PC-9 (cell line): ENCODE measurements at regions of chr7 and their contacts with region 1.

Region 1: GRCh38 chr7:105309235-105310169 is 79.2 kb downstream of the SRPK2 start:
- DNase-seq: no peak
- H3K4me3 ChIP-seq: no peak overlapping the region
- H3K27ac ChIP-seq: no peak overlapping the region
- H3K4me1 ChIP-seq: peaks cover 10% of the 10 kb centered on the region
- H3K27me3 ChIP-seq: no peaks in the 10 kb centered on the region
- CTCF ChIP-seq: no peak

Region 2: GRCh38 chr7:105131033-105131656 is 178.4 kb before region 1 on chr7:
- CTCF ChIA-PET with region 1: no interaction called
- POLR2A ChIA-PET with region 1: interaction called, 5 read pairs
- intact Hi-C with region 1: loop called (anchors 10 kb)
- DNase-seq: no peak
- H3K4me3 ChIP-seq: no peak overlapping the region
- H3K27ac ChIP-seq: no peak overlapping the region
- H3K4me1 ChIP-seq: peaks cover 7% of the 10 kb centered on the region
- H3K27me3 ChIP-seq: no peaks in the 10 kb centered on the region
- CTCF ChIP-seq: no peak